ENCODE measurements at regions of chr1 and their contacts with region 1.

Region 1: DNA sequence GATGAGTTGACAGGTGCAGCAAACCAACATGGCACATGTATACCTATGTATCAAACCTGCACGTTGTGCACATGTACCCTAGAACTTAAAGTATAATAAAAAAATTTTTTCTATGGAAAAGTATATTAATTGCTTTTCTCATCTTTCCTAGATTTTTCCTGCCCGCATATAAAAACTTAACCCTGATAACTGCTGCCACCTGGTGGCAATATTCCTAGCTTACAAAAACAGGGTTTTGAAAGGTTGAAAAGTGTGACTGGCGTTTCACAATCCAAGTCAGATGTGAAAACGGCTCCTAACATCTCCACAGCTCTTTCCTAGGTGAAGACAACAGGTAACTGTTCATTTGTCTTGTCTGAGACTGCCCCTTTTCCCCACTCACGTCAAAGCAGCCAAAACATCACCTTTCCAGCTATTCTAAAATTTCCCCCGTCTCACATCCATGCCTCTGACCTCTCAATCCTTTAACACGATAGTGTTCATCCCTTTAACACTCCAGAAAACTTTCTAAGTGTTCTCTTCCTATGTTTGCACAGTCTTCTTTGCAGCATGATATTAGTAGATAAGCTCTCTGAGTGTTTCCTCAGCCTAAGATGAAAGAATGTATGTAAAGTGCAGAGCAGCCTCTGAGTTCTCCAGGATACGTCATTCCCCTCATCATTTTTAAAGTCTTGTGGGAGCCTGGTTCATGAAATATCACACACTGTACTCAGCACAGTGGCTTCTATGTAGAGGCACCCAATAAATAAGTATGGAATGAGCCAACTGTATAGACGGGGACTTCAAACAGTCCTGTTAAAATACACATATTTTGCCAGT is 27.5 kb downstream of the OVGP1 start:
- ATAC-seq: peak in 2 of 8 experiments; percentile 22 to 42
- H3K4me3 ChIP-seq: no peak overlapping the region
- H3K27ac ChIP-seq: no peak overlapping the region
- H3K4me1 ChIP-seq: no peaks in the 10 kb centered on the region

Region 2: DNA sequence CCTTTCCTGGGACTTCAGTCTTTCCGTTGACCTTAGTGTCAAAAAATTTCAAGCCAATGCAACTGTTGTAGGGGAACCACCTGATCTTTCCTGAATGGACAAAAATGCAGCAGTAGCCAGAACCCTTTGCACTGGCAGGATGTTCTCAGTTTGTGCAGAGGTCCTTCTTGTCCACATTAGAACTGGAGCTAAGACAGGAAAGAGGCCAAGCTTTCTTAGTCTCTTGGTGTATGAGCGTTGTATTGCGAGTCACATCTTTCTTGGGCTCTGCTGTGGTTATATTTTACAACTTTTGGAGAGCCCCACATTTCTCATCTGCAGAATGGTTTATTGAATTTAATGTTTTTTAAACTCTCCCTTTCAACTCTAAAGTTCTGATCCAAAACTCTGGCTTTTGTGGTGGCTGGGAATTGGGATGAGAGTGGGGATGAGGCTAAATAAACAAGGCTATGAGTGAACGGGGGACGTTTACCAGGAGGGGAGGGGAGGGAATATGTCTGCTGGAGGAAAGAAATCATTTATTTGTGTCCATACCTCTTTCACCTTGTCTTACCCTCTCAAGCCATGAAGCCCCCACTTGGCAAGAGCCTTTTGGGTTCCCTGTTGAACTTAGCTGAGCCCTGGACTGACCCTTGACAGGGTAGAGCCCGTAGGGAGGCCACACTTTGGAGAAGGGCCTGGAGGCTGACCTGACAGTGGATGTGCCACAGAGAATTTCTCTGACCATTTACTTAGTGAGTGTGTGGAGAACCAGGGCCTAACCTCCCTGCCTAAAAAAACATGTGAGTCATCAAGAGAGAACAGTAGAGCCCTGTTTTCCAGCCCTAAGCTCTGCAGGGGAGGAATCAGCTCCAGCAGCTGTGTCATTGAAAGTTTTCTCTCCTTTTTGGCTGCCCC is 171.9 kb before region 1 on chr1:
- in situ Hi-C with region 1: loop called in 6 of 9 experiments (anchors 10 to 25 kb)
- ATAC-seq: peak in 2 of 8 experiments; percentile 91 to 93
- H3K4me3 ChIP-seq: no peak overlapping the region
- H3K27ac ChIP-seq: no peak overlapping the region
- H3K4me1 ChIP-seq: no peaks in the 10 kb centered on the region

Region 3: GRCh38 chr1:111789666-111790316 is 389.8 kb after region 1 on chr1:
- in situ Hi-C with region 1: no loop called
- ATAC-seq: peak in 1 of 8 experiments; percentile 12
- H3K4me3 ChIP-seq: no peak overlapping the region
- H3K27ac ChIP-seq: no peak overlapping the region
- H3K4me1 ChIP-seq: peaks cover 12 to 15% of the 10 kb centered on the region in 2 donors

Region 4: DNA sequence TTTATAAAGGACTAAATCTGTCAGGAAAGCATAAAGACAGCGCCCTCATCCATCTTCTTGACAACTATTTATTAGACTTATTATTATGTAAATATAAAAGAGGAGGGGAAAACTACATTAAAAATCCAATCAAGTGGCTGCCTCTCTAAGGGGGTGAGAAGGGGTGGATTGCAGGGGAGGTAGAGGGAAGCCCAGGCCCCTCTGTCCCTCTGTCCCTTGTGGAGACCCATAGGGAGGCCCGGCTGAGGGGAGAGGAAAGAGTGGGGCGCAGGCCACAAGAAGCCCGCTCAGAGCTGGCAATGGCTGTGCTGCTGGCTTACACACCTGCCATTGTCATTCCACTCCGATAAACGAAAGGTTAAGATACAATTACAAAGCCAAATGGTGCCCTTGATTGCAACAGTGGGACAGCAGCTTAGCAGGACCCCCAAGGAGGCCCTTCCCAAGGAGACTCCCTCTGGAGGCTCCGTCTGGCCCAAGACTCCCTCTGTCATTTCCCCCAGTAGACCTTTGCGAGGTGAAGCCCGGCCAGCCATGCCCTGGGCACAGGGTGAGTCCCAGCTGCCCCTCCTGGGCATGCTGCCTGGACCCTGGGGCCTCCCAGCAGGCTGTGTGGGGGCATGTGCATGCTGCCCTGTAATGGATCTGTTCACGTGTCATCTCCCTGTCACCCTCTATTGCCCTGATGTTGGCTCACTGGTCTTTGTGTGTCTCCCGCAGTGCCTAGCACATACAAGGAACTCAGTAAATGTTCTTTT is 544.2 kb after region 1 on chr1:
- in situ Hi-C with region 1: no loop called
- ATAC-seq: peak in 5 of 8 experiments; percentile 12 to 73 (median 61)
- H3K4me3 ChIP-seq: no peak overlapping the region
- H3K27ac ChIP-seq: no peak overlapping the region
- H3K4me1 ChIP-seq: peaks cover 22 to 39% of the 10 kb centered on the region in 2 donors